Activated CD8-positive, alpha-beta memory T cell treated with anti-CD3 and anti-CD28 coated beads, Interleukin-2, amount 10 ng/mL, durations not matched to agents 7 days and 5 days (primary cell): ENCODE measurements at regions of chr19 and their contacts with region 1.

Region 1: GRCh38 chr19:40598121-40598917 is 2.9 kb upstream of the LTBP4 start:
- DNase-seq: peak; percentile 88
- ATAC-seq: peak; percentile 74
- H3K4me3 Mint-ChIP-seq: no peak overlapping the region
- H3K27ac Mint-ChIP-seq: no peak overlapping the region
- H3K4me1 Mint-ChIP-seq: peaks cover 56% of the 10 kb centered on the region
- H3K27me3 Mint-ChIP-seq: peaks cover 52% of the 10 kb centered on the region

Region 2: GRCh38 chr19:40465557-40466150 is 132.7 kb before region 1 on chr19 and contains the start of gene BLVRB:
- CTCF ChIA-PET with region 1: interaction called, 35 read pairs
- DNase-seq: peak; percentile 99
- ATAC-seq: peak; percentile 88
- H3K4me3 Mint-ChIP-seq: peak within 1 kb of the TSS; percentile 79
- H3K27ac Mint-ChIP-seq: peak within 1 kb of the TSS; percentile 85
- H3K4me1 Mint-ChIP-seq: peaks cover 34% of the 10 kb centered on the region
- H3K27me3 Mint-ChIP-seq: peaks cover 23% of the 10 kb centered on the region
- total RNA-seq, gene BLVRB: 12.9 to 23.3 TPM

Region 3: DNA sequence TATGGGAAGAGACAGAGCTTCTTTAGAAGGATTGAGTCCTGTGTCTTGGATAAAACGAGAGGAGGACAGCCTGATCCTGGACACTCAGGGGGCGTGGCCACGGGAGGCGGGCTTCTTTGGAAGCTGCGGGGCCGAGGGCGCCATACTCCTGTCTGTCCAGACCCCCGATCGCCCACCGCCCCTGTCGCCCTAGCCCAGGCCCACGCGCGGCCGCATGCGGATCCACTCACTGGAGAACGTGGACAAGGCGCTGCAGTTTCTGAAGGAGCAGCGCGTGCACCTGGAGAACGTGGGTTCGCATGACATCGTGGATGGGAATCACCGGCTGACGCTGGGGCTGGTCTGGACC is 108.5 kb before region 1 on chr19:
- CTCF ChIA-PET with region 1: no interaction called
- DNase-seq: no peak
- ATAC-seq: no peak
- H3K4me3 Mint-ChIP-seq: no peak overlapping the region
- H3K27ac Mint-ChIP-seq: no peak overlapping the region
- H3K4me1 Mint-ChIP-seq: peaks cover 6% of the 10 kb centered on the region
- H3K27me3 Mint-ChIP-seq: peaks cover 18% of the 10 kb centered on the region

Region 4: GRCh38 chr19:40502647-40503319 is 95.5 kb before region 1 on chr19:
- CTCF ChIA-PET with region 1: no interaction called
- DNase-seq: no peak
- ATAC-seq: no peak
- H3K4me3 Mint-ChIP-seq: no peak overlapping the region
- H3K27ac Mint-ChIP-seq: no peak overlapping the region
- H3K4me1 Mint-ChIP-seq: no peaks in the 10 kb centered on the region
- H3K27me3 Mint-ChIP-seq: peaks cover 6% of the 10 kb centered on the region

Region 5: DNA sequence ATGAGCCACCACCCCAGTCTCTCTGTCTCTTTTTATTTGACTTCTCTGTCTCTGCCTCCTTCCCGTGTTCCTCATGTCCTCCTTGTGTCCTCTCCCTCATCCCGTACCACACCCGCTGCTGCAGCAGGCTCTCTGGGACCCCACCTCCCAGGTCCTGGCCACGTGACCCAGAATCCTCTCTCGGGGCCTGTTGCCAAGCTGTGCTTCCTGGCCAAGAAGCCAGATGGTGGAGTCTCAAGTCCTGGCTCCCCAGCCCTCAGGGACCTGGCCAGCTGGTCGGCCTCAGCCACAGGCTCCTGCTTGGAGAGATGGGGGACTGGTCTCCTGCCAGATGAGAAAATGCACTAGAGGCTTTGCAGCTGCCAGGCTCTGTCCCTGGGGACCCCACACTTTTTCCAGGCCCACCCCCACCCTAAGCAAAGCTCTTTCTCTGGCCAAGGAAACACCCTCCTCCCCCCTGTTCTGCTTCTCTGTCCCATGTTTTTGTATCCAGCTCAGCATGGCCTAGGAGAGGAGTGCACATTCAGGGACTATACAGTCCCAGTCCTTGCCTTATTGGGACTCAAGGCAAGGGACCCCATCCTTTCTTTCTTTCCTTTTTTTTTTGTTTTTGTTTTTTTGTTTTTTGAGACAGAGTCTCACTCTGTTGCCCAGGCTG is 56.0 kb before region 1 on chr19:
- CTCF ChIA-PET with region 1: interaction called, 29 read pairs
- DNase-seq: no peak
- ATAC-seq: no peak
- H3K4me3 Mint-ChIP-seq: no peak overlapping the region
- H3K27ac Mint-ChIP-seq: no peak overlapping the region
- H3K4me1 Mint-ChIP-seq: no peaks in the 10 kb centered on the region
- H3K27me3 Mint-ChIP-seq: peaks cover 14% of the 10 kb centered on the region

Region 6: GRCh38 chr19:40549007-40549708 is 49.2 kb before region 1 on chr19:
- CTCF ChIA-PET with region 1: interaction called, 29 read pairs
- DNase-seq: peak; percentile 78
- ATAC-seq: peak; percentile 93
- H3K4me3 Mint-ChIP-seq: no peak overlapping the region
- H3K27ac Mint-ChIP-seq: no peak overlapping the region
- H3K4me1 Mint-ChIP-seq: peaks cover 8% of the 10 kb centered on the region
- H3K27me3 Mint-ChIP-seq: peaks cover 52% of the 10 kb centered on the region

Region 7: DNA sequence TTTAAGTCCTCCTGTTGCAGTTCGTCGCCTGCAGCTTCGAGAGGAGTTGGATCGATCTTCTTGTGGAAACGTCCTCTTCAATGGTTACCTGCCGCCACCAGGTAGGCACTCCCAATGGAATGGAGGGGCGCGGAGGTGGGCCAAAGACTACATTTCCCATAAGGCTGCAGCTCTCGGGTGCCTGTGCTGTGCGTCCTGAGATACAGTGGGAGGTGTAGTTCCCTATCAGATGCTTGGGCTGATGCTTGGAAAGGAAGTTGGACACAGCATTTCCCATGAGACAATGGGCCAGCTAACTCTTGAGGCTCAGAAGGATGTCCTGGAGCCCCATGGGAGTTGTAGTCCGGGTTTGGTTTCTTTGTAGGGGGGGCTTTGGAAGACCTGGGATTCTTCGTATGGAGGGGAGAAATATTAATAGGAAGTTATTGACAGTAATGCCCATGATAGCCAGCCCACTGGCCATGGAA is 19.8 kb before region 1 on chr19:
- CTCF ChIA-PET with region 1: interaction called, 40 read pairs
- DNase-seq: no peak
- ATAC-seq: no peak
- H3K4me3 Mint-ChIP-seq: peak overlapping the region; percentile 90
- H3K27ac Mint-ChIP-seq: no peak overlapping the region
- H3K4me1 Mint-ChIP-seq: peaks cover 20% of the 10 kb centered on the region
- H3K27me3 Mint-ChIP-seq: no peaks in the 10 kb centered on the region